T-cell (primary cell): ENCODE measurements at regions of chr7 and their contacts with region 1.

Region 1: GRCh38 chr7:133364959-133365690 is 112.2 kb downstream of the EXOC4 start:
- DNase-seq: peak in 1 of 35 experiments; percentile 6
- ATAC-seq: no peak
- H3K4me3 ChIP-seq: no peak overlapping the region
- H3K4me3 Mint-ChIP-seq: no peak overlapping the region
- H3K27ac ChIP-seq: no peak overlapping the region
- H3K27ac Mint-ChIP-seq: no peak overlapping the region
- H3K4me1 ChIP-seq: peaks cover 0 to 6% of the 10 kb centered on the region in 2 experiments
- H3K4me1 Mint-ChIP-seq: peaks cover 16 to 20% (median 19%) of the 10 kb centered on the region in 3 donors
- H3K27me3 ChIP-seq: no peaks in the 10 kb centered on the region
- H3K27me3 Mint-ChIP-seq: no peaks in the 10 kb centered on the region

Region 2: DNA sequence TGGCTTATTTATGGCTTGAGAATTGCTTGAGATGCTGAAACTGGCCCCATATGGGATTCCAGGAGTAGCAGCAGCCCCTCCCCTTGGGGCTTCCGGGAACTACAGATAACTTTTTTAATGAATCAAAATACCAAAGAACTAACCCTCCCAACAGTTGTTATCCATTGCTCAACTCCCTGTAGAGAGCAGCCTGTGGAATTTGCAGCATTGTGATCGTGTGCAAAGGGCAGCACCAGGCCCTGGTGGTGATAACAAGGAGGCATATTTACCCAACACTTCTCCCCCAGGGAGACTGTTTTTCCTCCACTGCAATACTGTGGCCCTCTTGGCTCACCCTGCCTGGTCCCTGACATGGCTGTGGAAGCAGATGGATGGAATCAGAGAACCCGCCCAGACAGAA is 985.1 kb before region 1 on chr7:
- CTCF ChIA-PET with region 1: no interaction called
- POLR2A ChIA-PET with region 1: no interaction called
- DNase-seq: no peak
- ATAC-seq: no peak
- H3K4me3 ChIP-seq: no peak overlapping the region
- H3K4me3 Mint-ChIP-seq: no peak overlapping the region
- H3K27ac ChIP-seq: no peak overlapping the region
- H3K27ac Mint-ChIP-seq: no peak overlapping the region
- H3K4me1 ChIP-seq: no peaks in the 10 kb centered on the region
- H3K4me1 Mint-ChIP-seq: no peaks in the 10 kb centered on the region
- H3K27me3 ChIP-seq: peaks cover 0 to 8% of the 10 kb centered on the region in 2 experiments
- H3K27me3 Mint-ChIP-seq: peaks cover 6 to 10% of the 10 kb centered on the region in 2 donors

Region 3: GRCh38 chr7:133348250-133348649 is 16.9 kb before region 1 on chr7:
- CTCF ChIA-PET with region 1: no interaction called
- POLR2A ChIA-PET with region 1: interaction called in 1 of 2 experiments, 10 read pairs
- DNase-seq: no peak
- ATAC-seq: no peak
- H3K4me3 ChIP-seq: no peak overlapping the region
- H3K4me3 Mint-ChIP-seq: no peak overlapping the region
- H3K27ac ChIP-seq: no peak overlapping the region
- H3K27ac Mint-ChIP-seq: no peak overlapping the region
- H3K4me1 ChIP-seq: no peaks in the 10 kb centered on the region
- H3K4me1 Mint-ChIP-seq: peaks cover 6 to 23% (median 21%) of the 10 kb centered on the region in 3 donors
- H3K27me3 ChIP-seq: no peaks in the 10 kb centered on the region
- H3K27me3 Mint-ChIP-seq: no peaks in the 10 kb centered on the region

Region 4: DNA sequence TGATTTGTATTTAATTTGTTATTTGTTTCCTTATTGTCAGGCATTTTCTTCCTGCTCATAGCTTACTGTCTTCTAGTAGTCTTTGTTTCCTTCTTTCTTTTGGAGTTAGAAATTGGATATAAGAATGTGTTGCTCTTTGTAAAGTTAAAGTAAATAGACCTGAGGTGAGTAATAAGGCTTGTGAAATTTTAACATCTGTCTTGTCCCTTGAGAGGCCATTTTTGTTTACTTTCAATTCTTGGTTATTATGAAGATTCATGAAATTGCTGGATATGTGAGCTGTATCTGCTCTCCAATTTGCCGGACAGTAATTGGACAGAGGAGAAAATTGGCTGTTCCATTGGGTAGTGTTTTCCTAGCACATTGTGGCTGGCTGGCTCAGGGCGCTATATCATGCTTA is 148.5 kb after region 1 on chr7:
- CTCF ChIA-PET with region 1: no interaction called
- POLR2A ChIA-PET with region 1: no interaction called
- DNase-seq: no peak
- ATAC-seq: no peak
- H3K4me3 ChIP-seq: no peak overlapping the region
- H3K4me3 Mint-ChIP-seq: no peak overlapping the region
- H3K27ac ChIP-seq: no peak overlapping the region
- H3K27ac Mint-ChIP-seq: no peak overlapping the region
- H3K4me1 ChIP-seq: no peaks in the 10 kb centered on the region
- H3K4me1 Mint-ChIP-seq: peaks cover 0 to 5% (median 0%) of the 10 kb centered on the region in 3 donors
- H3K27me3 ChIP-seq: no peaks in the 10 kb centered on the region
- H3K27me3 Mint-ChIP-seq: no peaks in the 10 kb centered on the region